Activated naive CD8-positive, alpha-beta T cell treated with anti-CD3 and anti-CD28 coated beads, Interleukin-2, amount 10 ng/mL, durations not matched to agents 7 days and 5 days (primary cell): ENCODE measurements at regions of chr3 and their contacts with region 1.

Region 1: GRCh38 chr3:9749645-9750555 is at the start of gene OGG1:
- DNase-seq: peak; percentile 96
- ATAC-seq: peak; percentile 91
- H3K4me3 Mint-ChIP-seq: peak within 1 kb of the TSS; percentile 98
- H3K27ac Mint-ChIP-seq: peak within 1 kb of the TSS; percentile 94
- H3K4me1 Mint-ChIP-seq: peaks cover 51% of the 10 kb centered on the region
- H3K27me3 Mint-ChIP-seq: no peaks in the 10 kb centered on the region
- total RNA-seq, gene OGG1: 41.3 to 46.1 TPM

Region 2: DNA sequence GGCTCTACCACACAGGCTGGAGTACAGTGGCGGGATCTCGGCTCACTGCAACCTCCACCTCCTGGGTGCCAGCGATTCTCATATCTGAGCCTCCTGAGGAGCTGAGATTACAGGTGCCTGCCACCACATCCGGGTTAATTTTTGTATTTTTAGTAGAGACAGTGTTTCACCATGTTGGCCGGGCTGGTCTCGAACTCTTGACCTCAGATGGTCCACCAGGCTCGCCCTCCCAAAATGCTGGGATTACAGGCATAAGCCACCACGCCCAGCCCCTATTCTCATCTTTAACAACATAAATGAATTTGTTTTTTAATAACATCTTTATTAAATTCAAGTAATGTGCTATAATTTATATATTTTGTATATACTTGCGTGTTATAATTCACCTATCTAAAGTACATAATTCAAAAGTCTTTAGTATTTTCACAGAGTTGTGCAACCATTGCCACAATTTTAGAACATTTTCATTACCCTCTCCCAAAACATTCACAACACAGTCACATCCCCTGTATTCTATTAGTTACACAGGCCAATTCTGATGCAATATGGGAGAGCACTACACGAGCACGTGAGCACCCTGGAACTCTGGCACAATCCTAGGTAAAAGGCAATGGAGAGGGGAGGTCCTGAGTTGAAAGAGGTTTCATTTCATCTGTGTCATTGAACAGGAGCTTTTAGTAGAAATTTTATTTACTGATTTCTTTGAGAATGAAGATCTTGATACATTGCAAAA is 121.8 kb before region 1 on chr3:
- POLR2A ChIA-PET with region 1: no interaction called
- DNase-seq: no peak
- ATAC-seq: no peak
- H3K4me3 Mint-ChIP-seq: no peak overlapping the region
- H3K27ac Mint-ChIP-seq: no peak overlapping the region
- H3K4me1 Mint-ChIP-seq: no peaks in the 10 kb centered on the region
- H3K27me3 Mint-ChIP-seq: peaks cover 8% of the 10 kb centered on the region

Region 3: DNA sequence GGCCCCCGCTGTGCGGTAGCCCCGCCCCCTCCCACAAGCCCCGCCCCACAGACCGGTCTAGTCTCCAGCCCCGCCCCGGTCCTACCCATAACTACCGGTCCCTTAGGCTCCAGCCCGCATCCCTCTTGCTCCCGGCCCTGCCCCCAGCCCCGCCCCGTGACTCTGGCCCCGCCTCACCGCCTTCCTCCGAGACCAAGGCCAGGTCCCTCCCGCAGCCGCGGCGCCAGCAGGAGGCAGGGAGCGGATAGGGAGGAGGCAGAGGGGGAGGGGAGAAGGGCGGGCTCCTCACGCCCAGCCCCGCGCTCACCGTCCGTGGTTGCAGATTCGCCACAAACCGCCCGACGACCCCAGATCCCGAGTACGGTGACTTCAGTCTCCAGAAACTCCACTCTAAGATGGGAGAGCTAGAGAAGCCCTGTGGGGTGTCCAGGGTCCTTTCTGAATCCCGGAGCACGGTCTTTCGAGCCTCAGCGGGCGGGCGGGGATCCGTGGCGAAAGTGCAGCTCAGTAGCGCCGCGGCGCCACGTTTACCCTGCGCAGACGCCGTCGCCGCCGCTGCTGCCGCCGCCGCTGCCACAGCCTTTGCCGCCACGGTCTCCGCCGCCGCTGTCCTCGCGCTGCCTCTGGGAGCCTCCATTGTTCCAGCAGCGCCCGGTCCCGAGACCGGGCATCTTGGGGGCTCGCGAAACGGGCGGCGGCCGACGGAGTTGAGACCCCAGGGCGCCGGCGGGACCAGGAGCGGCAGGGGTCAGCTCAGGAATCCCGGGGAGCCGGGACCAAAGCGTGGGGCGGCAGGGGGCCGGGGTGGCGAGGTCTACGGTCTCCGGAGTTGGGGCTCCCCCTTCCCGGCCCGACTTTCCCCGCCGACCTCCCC is 18.5 kb before region 1 on chr3 and contains the start of gene BRPF1:
- POLR2A ChIA-PET with region 1: interaction called, 65 read pairs
- DNase-seq: peak; percentile 97
- ATAC-seq: peak; percentile 92
- H3K4me3 Mint-ChIP-seq: peak within 1 kb of the TSS; percentile 98
- H3K27ac Mint-ChIP-seq: peak within 1 kb of the TSS; percentile 96
- H3K4me1 Mint-ChIP-seq: peaks cover 60% of the 10 kb centered on the region
- H3K27me3 Mint-ChIP-seq: no peaks in the 10 kb centered on the region
- total RNA-seq, gene BRPF1: 57.3 to 58.8 TPM